Panc1 (cell line): ENCODE measurements at regions of chr3 and their contacts with region 1.

Region 1: GRCh38 chr3:113838631-113839209 is at the start of gene GRAMD1C:
- DNase-seq: no peak
- ATAC-seq: peak; percentile 98
- H3K4me3 ChIP-seq: peak within 1 kb of the TSS; percentile 65 to 93
- H3K27ac ChIP-seq: peak within 1 kb of the TSS; percentile 84
- H3K4me1 ChIP-seq: no peaks in the 10 kb centered on the region
- H3K27me3 ChIP-seq: no peaks in the 10 kb centered on the region
- CTCF ChIP-seq: peak; percentile 98
- total RNA-seq, gene GRAMD1C: 3.9 TPM

Region 2: DNA sequence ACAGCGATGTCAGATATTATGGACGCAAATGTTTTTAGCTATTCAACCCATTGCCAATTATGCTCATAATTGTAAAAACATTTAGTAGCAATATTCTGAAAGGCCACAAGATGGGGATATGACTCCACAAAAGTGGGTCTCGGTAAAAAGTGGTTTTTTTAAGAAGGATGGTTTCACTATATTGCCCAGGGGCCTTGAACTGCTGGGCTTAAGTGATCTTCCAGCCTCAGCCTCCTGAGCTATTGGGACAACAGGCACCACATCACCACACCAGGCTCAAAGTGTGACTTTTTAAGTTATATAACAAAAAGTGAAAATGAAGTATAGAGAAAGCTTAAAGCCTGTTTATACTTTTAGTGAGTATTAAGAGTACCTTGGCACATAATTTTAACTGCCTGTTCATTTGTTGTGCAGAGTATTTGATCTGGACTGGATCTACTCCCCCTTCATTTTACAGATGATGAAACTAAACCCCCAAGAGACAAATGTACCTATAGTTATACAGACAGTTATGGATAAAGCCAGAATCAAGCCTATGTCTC is 102.1 kb before region 1 on chr3:
- CTCF ChIA-PET with region 1: no interaction called
- POLR2A ChIA-PET with region 1: no interaction called
- in situ Hi-C with region 1: no loop called
- intact Hi-C with region 1: loop called (anchors 2 kb)
- DNase-seq: no peak
- ATAC-seq: peak; percentile 55
- H3K4me3 ChIP-seq: no peak overlapping the region
- H3K27ac ChIP-seq: peak overlapping the region; percentile 32; the same call in 1 of the 2 replicates
- H3K4me1 ChIP-seq: peaks cover 48% of the 10 kb centered on the region
- H3K27me3 ChIP-seq: no peaks in the 10 kb centered on the region
- CTCF ChIP-seq: peak; percentile 79

Region 3: DNA sequence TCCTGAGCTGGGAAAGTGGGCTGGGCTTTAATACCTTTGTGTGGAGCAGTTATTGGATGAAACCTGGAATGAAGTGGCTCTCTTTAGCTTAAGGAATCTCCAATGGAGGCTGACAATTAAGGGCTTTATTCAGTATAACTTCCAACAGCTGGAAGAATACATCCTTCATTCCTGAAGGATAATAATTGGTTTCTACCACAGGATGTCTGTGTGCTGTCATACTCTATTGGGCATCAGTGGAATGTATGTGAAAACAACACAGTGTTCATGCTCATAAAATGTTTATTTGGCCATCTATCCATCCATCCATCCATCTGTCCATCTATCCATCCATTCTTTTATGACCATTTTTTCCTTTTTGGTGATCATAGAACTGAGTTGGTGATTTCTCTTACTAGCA is 1563.9 kb after region 1 on chr3:
- CTCF ChIA-PET with region 1: interaction called, 15 read pairs
- POLR2A ChIA-PET with region 1: no interaction called
- in situ Hi-C with region 1: no loop called
- intact Hi-C with region 1: no loop called
- DNase-seq: no peak
- ATAC-seq: no peak
- H3K4me3 ChIP-seq: no peak overlapping the region
- H3K27ac ChIP-seq: no peak overlapping the region
- H3K4me1 ChIP-seq: no peaks in the 10 kb centered on the region
- H3K27me3 ChIP-seq: no peaks in the 10 kb centered on the region
- CTCF ChIP-seq: no peak